Cardiac septum (tissue), 1 donor: ENCODE measurements at regions of chr21 and their contacts with region 1.

Region 1: DNA sequence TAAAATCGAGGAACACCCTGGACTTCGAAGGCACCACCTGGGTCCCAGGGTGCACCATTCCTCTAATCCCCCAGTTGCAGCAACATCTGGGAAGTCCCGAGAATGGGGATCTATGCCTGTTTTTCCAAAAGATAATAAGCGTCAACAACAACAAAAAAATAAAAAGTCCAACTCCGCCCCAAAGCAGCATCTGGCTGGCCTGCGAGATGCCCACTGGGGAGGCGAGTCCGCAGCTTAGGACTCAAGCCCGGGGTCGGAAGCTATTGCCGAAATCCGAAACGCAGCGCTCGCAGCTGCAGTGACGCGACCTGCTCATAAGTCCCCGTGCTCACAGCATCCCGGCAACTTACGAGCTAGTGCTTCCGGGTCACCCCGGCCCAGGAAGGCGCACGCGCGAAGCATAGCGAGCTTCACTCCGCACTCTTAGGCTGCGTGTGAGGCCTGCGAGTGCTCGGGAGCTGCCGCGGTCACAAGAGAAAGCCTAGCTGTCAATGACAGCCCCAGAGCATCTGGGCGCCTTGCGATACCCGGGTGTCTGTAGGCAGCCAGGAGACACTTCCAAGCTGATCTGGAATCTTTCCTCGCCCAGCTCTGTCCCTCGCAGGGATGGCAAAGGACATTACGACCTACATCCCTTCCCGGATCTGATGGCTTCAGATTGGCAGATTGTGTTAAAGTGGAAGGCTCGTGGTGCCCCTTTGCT is 9.9 kb upstream of the LTN1 start:
- DNase-seq: peak; percentile 98

Region 2: DNA sequence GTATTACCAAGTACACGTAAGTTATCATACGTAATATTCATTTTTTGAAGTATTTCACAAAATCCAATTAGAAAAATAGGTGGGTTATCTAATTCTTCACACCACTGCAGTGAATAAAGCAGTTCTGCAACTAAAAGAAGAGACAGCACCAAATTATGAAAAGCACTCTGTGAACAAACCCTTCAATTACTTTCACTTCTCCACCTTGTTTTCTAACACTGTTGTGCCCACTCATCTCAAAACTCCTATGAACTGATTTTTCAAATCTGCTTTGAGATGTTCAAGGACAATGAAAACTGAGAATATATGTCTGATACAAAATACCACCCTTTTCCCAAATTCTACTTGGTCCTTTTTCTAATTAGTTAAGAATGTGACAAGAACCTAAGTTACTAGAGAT is 49.3 kb before region 1 on chr21:
- intact Hi-C with region 1: no loop called
- DNase-seq: no peak

Region 3: GRCh38 chr21:29018540-29018939 is 15.9 kb after region 1 on chr21:
- intact Hi-C with region 1: loop called (anchors 2 kb)
- DNase-seq: no peak

Region 4: DNA sequence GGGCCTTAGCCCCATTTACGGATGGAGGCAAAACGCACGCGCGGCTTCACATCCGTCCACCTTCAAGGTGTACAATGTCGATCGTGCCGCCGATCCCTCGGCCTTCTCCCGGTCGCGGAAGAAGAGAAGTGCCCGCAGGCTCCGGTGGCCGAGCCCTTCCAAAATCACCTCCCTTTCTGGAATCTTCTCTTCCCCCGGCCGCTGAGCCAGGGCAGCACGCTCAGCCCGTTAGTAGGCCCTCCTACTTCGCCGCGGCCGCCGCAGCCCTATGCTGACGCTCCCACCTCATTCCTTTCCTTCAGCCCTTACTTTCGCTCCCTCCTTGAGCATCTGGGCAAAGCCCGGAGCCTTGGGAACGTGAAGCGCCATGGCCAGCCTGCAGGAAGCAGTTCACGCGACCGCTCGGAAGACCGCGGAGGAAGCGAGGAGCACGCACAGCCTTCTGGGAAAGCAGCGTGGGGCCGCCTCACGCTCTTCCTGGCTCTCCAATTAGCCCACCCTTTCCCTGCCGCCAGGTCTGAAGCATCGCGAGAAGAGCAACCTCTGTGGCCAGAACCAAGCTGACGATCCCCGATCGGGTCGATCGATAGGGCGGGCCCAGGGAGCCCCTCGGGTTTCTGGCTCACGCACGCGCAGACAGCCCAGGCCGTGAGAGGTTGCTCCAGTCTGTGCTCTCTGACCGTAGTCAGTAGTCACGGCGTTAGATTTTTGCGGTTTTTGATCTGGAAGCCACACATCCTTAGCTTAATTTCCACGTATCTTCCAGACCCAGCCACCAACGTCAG is 70.8 kb after region 1 on chr21 and contains the start of gene CCT8:
- intact Hi-C with region 1: loop called (anchors 2 kb)
- DNase-seq: peak; percentile 99
- total RNA-seq, gene CCT8: 116 TPM

Region 5: GRCh38 chr21:29418813-29419212 is 416.2 kb after region 1 on chr21:
- intact Hi-C with region 1: no loop called
- DNase-seq: no peak

Region 6: DNA sequence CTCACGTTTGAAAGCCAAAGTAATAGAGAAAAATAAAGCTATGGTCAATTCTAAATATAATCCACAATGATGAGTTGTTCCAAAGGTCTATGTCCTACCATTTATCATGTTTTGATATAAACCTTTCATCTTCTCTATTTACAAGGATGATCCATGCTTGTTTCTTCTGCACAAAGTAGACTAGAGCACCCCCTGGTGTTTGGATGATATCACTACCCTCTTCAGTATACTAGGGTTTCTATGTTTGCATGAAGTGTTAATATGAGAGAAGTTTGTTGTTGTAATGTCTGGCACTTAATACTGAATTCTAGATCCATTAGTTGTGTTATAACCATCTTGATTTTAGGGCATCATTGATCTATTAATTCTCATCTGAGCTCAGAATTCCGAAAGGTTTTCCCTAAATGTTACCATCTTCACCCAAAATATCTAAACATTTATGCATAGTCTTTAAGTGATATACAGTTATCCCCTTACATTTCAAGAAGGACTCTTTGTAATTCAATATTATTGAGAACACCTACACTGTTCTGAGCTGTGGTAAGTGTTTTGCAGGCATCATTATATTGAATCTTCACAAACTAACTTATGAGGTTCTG is 1192.2 kb after region 1 on chr21:
- intact Hi-C with region 1: no loop called
- DNase-seq: no peak